ENCODE measurements at regions of chr4 and their contacts with region 1.

Region 1: DNA sequence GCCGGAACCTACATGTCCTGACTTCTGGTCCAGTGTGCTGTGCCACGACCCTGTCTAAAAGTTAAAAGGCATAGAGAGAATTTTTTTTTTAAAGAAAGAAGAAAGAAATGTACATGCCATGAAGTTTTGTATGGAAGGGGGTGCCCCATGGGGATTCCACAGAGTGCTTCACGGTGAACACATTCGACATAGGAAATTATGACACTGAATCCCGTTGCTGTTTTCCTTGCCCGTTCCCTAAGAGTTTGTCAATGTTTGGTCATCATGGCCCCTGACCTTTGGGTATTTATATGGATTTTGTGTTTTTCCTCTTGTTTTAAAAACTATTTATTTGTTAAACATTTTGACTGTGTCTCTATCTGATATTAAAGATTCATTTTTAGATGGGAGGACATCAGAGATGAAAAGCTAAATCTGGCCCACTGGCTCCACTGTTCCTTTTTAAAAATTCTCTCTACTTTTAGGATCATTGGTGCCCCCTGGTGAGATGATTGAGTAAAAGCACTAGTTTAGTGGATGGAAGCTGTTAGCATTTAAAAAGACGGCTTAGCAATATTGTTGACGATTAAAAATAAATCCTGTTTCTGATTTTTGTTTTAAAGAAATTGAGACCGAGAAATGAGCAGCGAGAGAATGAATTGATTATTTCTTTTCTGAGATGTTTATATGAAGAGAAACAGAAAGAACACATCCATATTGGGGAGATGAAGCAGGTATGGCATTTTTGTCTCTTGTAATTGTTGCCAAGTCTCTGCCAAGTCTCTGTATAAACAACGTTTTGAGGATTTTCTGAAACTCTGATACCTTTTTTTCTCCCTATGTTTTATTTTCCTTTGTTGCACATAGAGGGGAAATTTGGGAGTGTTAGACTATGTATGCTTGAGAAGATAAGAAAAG is 75.0 kb downstream of the PTTG2 start:
- DNase-seq: peak; percentile 70
- CTCF ChIP-seq: peak; percentile 58

Region 2: GRCh38 chr4:37594108-37594507 is 441.1 kb before region 1 on chr4:
- in situ Hi-C with region 1: loop called (anchors 10 kb)
- DNase-seq: no peak
- CTCF ChIP-seq: no peak

Region 3: DNA sequence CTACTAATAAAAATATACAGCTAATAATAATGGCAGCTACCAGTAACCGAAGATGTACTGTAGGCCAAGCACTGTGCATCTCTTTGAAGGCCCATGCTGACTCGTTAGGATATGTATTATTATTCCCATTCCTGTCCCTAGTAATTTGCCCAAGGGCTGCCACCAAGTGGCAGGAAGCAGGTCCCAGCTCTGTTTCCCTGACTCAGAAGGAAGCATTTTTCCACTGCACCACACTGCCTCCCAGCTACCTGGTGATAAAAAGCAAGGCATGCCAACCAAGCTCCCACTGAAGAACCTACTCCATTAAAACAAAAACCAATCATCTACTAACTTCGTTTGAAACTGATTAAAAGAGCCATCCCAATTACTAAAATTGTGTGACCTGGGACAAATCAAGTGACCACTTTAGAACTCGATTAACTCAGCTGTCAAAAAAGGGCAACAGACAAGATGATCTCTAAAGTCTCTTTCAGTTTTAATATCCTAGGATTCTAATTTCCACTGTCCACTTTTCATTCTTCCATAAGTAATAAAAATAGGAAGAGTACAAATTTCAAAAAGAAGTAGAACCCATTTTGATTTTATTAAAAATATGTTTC is 233.1 kb before region 1 on chr4:
- in situ Hi-C with region 1: loop called (anchors 5 kb)
- DNase-seq: no peak
- CTCF ChIP-seq: peak; percentile 55

Measured in GM13976 (cell line).